WTC11 (cell line): ENCODE measurements at regions of chr9 and their contacts with region 1.

Region 1: GRCh38 chr9:114108016-114108833 is 9.1 kb upstream of the KIF12 start:
- DNase-seq: peak; percentile 90
- ATAC-seq: peak; percentile 96
- H3K4me3 Mint-ChIP-seq: no peak overlapping the region
- H3K27ac Mint-ChIP-seq: no peak overlapping the region
- H3K4me1 Mint-ChIP-seq: peaks cover 10% of the 10 kb centered on the region
- H3K27me3 Mint-ChIP-seq: peaks cover 83% of the 10 kb centered on the region
- CTCF ChIP-seq: peak; percentile 84

Region 2: DNA sequence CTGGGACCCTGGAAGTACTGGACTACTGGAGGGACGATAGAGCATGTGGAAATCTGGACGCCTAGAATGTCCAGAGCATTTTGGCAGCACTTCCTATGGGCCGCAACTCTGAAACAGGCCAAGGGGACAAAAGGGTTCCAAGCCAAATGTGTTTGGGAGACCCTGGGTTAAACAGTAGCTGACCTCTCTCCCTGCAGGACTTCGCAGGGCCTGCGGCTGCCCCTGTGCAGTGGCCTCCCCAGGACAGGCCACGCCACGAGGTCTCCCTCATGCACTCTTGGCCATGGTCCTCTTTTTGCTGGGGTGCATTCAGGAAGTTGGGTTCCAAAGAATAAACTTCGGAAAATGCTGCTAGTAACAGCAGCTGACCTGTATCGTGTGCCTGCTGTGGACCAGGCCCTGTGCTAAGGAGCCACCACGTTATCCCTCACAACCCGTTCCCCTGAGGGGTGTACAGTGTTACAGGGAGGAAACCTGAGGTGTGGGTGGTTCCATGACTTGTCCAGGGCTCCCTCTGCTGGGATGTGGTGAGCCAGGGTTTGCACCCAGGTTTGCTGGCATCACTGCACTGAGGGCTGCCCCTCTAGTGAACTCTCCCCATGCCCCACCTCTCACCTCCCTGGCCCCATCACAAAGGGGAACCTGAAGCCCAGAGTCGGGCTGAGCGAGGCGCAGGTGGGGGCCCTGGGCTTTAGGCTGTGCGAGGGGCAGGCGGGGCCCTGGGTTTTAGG is 109.5 kb before region 1 on chr9:
- CTCF ChIA-PET with region 1: no interaction called
- POLR2A ChIA-PET with region 1: no interaction called
- DNase-seq: peak; percentile 36
- ATAC-seq: peak; percentile 83
- H3K4me3 Mint-ChIP-seq: no peak overlapping the region
- H3K27ac Mint-ChIP-seq: peak overlapping the region; percentile 57; the same call in 1 of the 2 replicates
- H3K4me1 Mint-ChIP-seq: no peaks in the 10 kb centered on the region
- H3K27me3 Mint-ChIP-seq: no peaks in the 10 kb centered on the region
- CTCF ChIP-seq: no peak

Region 3: DNA sequence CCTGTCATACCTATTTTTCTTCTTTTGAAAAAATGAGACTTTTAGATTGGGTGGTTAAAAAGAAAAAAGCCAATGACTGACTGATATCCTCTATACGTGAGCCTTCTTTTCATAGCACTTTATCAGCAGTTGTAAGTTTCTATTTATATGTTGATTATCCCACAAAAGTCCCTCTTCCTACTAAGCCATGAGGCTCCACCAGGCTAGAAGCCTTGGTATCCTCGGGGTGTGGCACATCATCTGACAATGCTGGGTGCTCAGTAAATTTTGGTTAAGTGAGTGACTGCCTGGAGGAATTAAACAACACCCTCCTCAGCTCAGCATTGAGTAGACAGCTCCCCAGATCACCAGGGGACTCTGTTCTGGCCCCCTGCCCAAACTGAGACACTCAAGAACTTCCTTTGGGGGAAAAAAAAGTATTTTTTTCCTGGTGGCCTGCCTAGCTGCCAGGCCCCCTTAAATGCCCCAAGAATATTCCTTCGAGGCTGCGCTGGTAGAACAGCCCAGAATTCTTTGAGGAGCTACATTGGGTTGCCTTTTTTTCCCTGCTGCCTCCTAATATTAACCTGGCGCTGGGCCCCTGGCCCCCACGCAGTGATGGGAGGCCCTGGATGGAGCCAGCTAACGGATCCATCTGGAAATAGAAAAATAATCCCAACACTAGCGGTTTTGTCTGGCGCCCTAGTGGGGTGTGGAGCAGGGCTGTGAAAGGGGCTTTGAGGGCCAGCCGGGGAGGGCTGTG is 23.8 kb after region 1 on chr9:
- CTCF ChIA-PET with region 1: interaction called, 12 read pairs
- POLR2A ChIA-PET with region 1: no interaction called
- DNase-seq: no peak
- ATAC-seq: no peak; the same call in 1 of the 2 replicates
- H3K4me3 Mint-ChIP-seq: no peak overlapping the region
- H3K27ac Mint-ChIP-seq: no peak overlapping the region
- H3K4me1 Mint-ChIP-seq: peaks cover 10% of the 10 kb centered on the region
- H3K27me3 Mint-ChIP-seq: peaks cover 56% of the 10 kb centered on the region
- CTCF ChIP-seq: no peak

Region 4: GRCh38 chr9:114163517-114163951 is 55.3 kb after region 1 on chr9:
- CTCF ChIA-PET with region 1: interaction called, 27 read pairs
- POLR2A ChIA-PET with region 1: no interaction called
- DNase-seq: peak; percentile 58
- ATAC-seq: peak; percentile 83
- H3K4me3 Mint-ChIP-seq: no peak overlapping the region
- H3K27ac Mint-ChIP-seq: 0 out of 2 replicates have a peak overlapping the region, but pooled peaks have one; percentile 35
- H3K4me1 Mint-ChIP-seq: peaks cover 25% of the 10 kb centered on the region
- H3K27me3 Mint-ChIP-seq: no peaks in the 10 kb centered on the region
- CTCF ChIP-seq: no peak

Region 5: DNA sequence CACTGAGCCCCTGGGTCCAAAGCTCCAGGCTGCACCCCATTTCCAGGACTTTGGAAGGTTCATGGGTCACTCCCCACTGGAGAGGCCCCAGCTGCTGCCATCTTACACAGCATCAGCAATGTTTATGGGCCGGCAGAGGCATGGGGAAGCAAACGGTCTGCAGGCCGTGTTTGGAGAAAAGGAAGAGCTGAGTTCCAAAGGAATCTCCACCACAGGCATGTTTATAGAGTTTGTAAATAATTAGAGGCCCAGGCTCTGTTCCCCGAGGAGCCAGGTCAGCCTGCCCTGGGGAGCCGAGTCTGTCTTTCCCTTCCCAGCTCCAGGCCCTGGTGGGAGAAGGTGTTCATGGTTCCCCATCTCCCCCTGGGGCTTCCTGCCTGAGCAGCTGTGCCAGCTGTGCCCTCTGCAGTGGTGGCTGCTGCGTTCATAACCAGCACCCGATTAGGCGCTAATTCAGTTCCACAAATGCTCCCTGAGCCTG is 111.9 kb after region 1 on chr9:
- CTCF ChIA-PET with region 1: interaction called, 11 read pairs
- POLR2A ChIA-PET with region 1: no interaction called
- DNase-seq: no peak
- ATAC-seq: no peak
- H3K4me3 Mint-ChIP-seq: no peak overlapping the region
- H3K27ac Mint-ChIP-seq: no peak overlapping the region
- H3K4me1 Mint-ChIP-seq: peaks cover 14% of the 10 kb centered on the region
- H3K27me3 Mint-ChIP-seq: no peaks in the 10 kb centered on the region
- CTCF ChIP-seq: no peak

Region 6: GRCh38 chr9:114263853-114264510 is 155.8 kb after region 1 on chr9:
- CTCF ChIA-PET with region 1: interaction called, 114 read pairs
- POLR2A ChIA-PET with region 1: no interaction called
- DNase-seq: peak; percentile 54
- ATAC-seq: peak; percentile 65
- H3K4me3 Mint-ChIP-seq: no peak overlapping the region
- H3K27ac Mint-ChIP-seq: no peak overlapping the region
- H3K4me1 Mint-ChIP-seq: no peaks in the 10 kb centered on the region
- H3K27me3 Mint-ChIP-seq: no peaks in the 10 kb centered on the region
- CTCF ChIP-seq: no peak